ENCODE measurements at regions of chr12 and their contacts with region 1.

Region 1: DNA sequence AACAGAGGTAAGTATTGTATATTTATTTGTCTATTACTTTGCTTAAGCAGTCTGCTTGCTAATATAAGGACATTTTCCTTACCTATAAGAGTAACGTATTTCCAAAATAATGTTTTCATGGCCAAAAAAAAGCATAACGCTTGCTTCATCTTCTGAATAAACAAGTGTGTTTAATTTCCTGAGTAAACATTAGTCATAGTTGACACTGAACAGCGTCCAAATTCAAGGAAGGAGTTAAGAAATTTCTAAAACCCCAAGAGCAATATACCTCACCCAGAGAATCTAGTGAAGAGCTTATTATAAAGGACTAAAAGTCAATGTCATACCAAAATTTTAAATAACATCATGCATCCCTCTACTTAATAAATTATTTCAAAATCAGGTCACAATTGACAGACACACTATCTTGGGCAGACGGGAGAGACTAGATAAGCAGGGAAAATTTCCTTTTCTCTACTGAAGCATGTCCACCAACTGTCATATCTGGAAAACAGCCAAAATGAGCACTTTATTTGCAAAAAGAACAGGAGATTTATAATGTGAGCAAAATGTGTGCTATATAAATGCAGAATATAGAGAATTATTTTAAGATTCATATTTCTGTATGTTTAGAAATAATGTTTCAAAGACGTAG is 25.1 kb downstream of the ANKS1B start:
- DNase-seq: peak; percentile 90
- H3K4me3 Mint-ChIP-seq: no peak overlapping the region
- H3K27ac Mint-ChIP-seq: no peak overlapping the region
- H3K4me1 Mint-ChIP-seq: peaks cover 16% of the 10 kb centered on the region
- H3K27me3 Mint-ChIP-seq: no peaks in the 10 kb centered on the region
- CTCF ChIP-seq: no peak

Region 2: DNA sequence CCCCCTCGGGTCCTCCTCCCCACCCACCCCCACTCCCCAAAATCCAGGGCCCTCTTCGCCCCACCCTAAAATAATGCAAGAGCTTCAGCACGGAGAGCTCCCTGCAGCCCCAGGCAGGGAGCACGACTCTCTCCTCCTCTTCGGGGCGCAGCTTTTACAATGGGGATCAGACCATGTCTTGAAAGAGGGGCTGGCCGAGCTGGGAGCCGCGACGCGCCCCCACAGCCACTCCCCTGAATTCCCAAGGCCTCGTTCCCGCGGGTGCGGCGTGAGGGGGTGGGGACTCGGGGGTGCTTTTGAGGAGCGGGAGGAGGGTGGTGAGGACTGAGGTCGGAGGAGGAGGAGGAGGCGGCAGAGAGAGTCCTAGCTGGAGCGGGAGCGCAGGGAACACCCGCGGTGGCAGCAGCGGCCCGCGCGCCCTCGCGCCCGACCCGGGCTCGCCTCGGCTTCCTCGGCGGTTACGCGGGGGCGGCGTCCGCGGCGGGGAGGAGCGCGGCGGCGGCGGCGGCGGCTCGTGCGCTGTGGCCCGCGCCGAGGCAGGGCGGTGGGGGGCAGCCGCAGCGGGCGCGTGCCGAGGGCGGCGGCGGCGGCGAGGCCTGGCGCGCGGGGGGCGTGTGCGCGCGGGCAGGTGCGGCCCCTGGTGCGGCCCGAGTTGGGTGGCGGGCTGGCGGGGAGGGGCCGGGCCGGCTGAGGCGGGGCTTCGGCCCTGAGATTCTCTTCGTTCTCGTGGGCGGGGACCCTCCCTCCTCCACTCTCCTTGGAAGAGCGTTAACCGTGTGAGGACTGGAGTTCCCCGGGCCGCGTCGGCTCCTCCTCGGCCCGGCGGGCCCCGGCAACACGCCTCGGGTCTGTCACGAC is 24.8 kb after region 1 on chr12 and contains the start of gene ANKS1B:
- CTCF ChIA-PET with region 1: interaction called, 4 read pairs
- POLR2A ChIA-PET with region 1: interaction called, 15 read pairs
- intact Hi-C with region 1: no loop called
- DNase-seq: peak; percentile 79
- H3K4me3 Mint-ChIP-seq: peak within 1 kb of the TSS; percentile 89
- H3K27ac Mint-ChIP-seq: peak within 1 kb of the TSS; percentile 16
- H3K4me1 Mint-ChIP-seq: peaks cover 20% of the 10 kb centered on the region
- H3K27me3 Mint-ChIP-seq: no peaks in the 10 kb centered on the region
- CTCF ChIP-seq: no peak
- total RNA-seq, gene ANKS1B: 17.7 and 18.8 TPM in 2 replicates

Region 3: GRCh38 chr12:100032971-100033370 is 73.3 kb after region 1 on chr12:
- CTCF ChIA-PET with region 1: no interaction called
- POLR2A ChIA-PET with region 1: no interaction called
- intact Hi-C with region 1: no loop called
- DNase-seq: no peak
- H3K4me3 Mint-ChIP-seq: no peak overlapping the region
- H3K27ac Mint-ChIP-seq: no peak overlapping the region
- H3K4me1 Mint-ChIP-seq: no peaks in the 10 kb centered on the region
- H3K27me3 Mint-ChIP-seq: no peaks in the 10 kb centered on the region
- CTCF ChIP-seq: no peak

Region 4: DNA sequence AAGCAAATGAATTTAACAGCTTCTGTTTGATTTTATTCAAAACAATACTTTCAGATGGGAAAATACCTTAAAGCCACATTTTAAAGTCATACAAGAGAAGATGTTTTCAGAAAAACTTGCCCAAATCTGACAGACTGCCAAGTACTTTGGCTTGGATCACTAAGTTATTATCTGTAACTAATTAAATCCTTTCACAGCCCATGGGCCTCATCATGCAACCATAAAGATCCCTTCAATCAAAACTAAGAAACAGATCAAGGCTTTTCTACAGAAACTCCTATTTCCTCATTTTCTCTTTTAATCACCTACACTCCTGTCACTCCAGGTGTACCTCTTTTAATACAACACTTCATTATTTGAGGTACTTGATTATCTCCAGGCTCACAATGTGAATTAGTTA is 154.9 kb after region 1 on chr12:
- CTCF ChIA-PET with region 1: no interaction called
- POLR2A ChIA-PET with region 1: no interaction called
- intact Hi-C with region 1: no loop called
- DNase-seq: no peak
- H3K4me3 Mint-ChIP-seq: no peak overlapping the region
- H3K27ac Mint-ChIP-seq: no peak overlapping the region
- H3K4me1 Mint-ChIP-seq: no peaks in the 10 kb centered on the region
- H3K27me3 Mint-ChIP-seq: no peaks in the 10 kb centered on the region
- CTCF ChIP-seq: no peak

Region 5: DNA sequence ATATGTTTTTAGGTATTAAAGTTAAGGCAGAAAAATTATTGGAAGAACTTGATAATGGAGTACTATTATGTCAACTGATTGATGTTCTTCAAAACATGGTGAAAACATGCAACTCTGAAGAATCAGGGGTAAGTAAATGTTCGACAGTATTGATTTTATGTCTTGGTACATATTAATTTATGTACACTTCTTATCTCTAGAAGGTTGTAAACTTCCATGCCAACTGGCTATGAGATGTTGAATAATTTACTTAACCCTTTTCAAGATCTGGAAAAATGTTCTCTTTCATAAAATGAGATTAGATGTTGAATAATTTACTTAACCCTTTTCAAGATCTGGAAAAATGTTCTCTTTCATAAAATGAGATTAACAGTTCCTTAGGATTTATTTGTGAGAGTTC is 642.0 kb after region 1 on chr12:
- CTCF ChIA-PET with region 1: no interaction called
- POLR2A ChIA-PET with region 1: no interaction called
- intact Hi-C with region 1: no loop called
- DNase-seq: no peak
- H3K4me3 Mint-ChIP-seq: no peak overlapping the region
- H3K27ac Mint-ChIP-seq: no peak overlapping the region
- H3K4me1 Mint-ChIP-seq: no peaks in the 10 kb centered on the region
- H3K27me3 Mint-ChIP-seq: no peaks in the 10 kb centered on the region
- CTCF ChIP-seq: no peak

Measured in MCF 10A (cell line).